IMR-90 (cell line): ENCODE measurements at regions of chr7 and their contacts with region 1.

Region 1: DNA sequence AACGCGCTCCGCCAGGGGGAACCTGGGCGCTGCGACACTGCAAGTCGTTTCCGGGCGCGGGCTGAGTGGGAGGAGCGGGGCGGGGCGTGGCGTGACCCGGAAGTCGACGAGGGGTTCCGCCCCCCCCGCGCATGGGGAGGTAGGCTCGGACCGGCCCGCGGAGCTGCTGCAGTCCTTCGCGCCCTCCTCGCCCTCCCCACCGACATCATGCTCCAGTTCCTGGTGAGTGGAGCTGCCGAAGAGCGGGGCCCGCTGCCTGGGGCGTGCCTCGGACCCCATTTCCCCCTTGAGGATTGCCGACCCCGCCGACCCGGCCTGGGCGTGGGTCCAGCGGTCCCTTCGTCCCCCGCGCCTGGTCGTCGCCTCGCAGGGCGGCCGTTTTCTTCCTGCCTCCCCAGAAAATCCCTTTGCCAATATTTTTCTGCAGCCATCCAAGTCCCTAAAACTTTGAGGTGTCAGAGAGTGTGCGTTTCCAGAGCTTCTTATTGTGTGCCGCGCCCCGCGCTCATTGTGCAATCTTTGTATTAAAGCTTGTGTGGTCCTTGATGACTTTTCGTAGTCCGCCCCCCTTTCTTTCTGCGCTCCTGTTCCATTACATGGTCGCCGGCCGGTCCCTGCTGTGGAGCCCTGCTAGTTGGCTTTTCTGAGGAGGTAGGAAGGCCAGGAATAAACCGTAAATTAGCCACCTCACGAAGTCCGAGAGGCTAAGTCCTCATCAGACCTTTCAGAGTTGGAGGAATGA is at the start of gene STMP1:
- DNase-seq: peak; percentile 96
- ATAC-seq: peak; percentile 93
- H3K4me3 ChIP-seq: peak within 1 kb of the TSS; percentile 84
- H3K27ac ChIP-seq: peak within 1 kb of the TSS; percentile 100
- H3K4me1 ChIP-seq: peaks cover 9% of the 10 kb centered on the region
- H3K27me3 ChIP-seq: no peaks in the 10 kb centered on the region
- CTCF ChIP-seq: peak; percentile 80
- POLR2A ChIP-seq: peak; percentile 94
- RAD21 ChIP-seq: peak; percentile 68
- total RNA-seq, gene STMP1: 6.1 and 11.9 TPM in 2 replicates

Region 2: DNA sequence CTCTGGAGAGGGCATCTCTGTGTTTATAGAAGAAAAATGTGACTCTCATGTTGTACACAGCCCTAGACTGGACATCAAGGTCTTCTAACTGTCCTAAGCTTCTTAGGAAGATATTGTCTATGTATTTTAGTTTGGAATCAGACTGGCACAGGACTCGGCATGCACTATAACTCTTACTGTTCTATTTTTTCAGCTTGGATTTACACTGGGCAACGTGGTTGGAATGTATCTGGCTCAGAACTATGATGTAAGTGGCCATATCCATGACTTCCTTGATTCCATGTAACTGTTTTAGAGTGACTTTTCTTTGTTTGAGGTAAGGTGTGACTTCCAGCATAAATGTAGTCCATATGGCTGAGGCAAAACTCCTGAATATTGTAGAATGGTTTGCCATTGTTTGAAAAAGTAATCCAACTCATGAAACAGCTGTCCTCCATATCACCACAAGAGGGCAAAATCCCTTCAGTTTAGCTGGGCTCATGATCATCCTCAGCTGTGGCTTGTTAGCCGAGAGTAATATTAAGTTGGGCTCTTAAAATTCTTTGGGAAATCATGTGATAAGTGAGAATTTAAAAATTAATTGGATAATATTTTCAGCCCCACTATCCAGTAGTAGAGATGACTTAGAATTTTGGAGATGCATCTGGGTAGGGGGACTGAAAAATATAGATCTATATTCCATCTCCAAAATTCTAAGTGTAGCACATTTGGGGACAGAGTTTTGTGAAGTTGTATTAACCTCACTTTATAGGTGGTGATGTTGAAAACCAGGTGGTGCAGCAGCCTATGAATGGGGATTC is 10.2 kb after region 1 on chr7:
- CTCF ChIA-PET with region 1: interaction called, 24 read pairs
- POLR2A ChIA-PET with region 1: no interaction called
- dilution Hi-C with region 1: no loop called
- in situ Hi-C with region 1: no loop called
- intact Hi-C with region 1: no loop called
- DNase-seq: peak; percentile 84
- ATAC-seq: peak; percentile 71
- H3K4me3 ChIP-seq: no peak overlapping the region
- H3K27ac ChIP-seq: no peak overlapping the region
- H3K4me1 ChIP-seq: peaks cover 9% of the 10 kb centered on the region
- H3K27me3 ChIP-seq: no peaks in the 10 kb centered on the region
- CTCF ChIP-seq: peak; percentile 88
- POLR2A ChIP-seq: no peak
- RAD21 ChIP-seq: peak; percentile 91

Region 3: DNA sequence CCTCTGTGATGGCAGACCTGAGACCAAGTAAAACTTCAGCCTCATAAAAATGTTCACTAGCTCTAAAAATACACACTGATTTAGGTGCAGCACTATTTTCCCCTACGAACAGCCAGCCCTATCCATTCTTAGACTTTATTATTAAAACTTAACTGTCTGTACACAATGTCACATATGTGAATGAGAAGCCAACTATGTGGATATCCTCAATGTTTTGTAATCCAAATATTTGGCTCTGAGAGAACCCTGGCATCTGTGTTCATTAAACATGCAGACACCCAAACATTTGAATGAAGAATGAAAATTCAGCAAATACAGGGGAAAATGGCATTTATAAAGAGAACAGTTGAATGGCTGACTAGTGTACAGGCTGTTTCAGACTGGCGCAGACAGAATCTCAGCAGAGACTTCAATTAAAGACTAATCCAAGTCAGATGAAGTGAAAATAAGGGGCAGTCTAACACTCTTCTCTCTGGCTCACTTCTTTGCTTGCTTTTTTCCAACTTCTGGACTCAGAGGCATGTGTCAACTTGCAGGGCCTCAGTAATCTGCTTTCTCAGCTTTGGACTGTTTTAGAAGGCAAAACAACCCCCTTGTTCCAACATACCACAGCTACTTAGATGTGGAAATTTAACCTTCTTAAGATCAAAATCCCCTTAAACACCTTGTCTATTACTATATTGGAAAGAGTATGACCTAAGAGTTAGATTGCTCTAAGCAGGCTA is 133.5 kb after region 1 on chr7:
- CTCF ChIA-PET with region 1: interaction called, 12 read pairs
- POLR2A ChIA-PET with region 1: no interaction called
- dilution Hi-C with region 1: no loop called
- in situ Hi-C with region 1: no loop called
- intact Hi-C with region 1: loop called (anchors 2 kb)
- DNase-seq: no peak
- ATAC-seq: peak; percentile 55
- H3K4me3 ChIP-seq: no peak overlapping the region
- H3K27ac ChIP-seq: peak overlapping the region; percentile 8; the same call in 1 of the 2 replicates
- H3K4me1 ChIP-seq: peaks cover 6% of the 10 kb centered on the region
- H3K27me3 ChIP-seq: no peaks in the 10 kb centered on the region
- CTCF ChIP-seq: no peak
- POLR2A ChIP-seq: no peak
- RAD21 ChIP-seq: no peak

Region 4: DNA sequence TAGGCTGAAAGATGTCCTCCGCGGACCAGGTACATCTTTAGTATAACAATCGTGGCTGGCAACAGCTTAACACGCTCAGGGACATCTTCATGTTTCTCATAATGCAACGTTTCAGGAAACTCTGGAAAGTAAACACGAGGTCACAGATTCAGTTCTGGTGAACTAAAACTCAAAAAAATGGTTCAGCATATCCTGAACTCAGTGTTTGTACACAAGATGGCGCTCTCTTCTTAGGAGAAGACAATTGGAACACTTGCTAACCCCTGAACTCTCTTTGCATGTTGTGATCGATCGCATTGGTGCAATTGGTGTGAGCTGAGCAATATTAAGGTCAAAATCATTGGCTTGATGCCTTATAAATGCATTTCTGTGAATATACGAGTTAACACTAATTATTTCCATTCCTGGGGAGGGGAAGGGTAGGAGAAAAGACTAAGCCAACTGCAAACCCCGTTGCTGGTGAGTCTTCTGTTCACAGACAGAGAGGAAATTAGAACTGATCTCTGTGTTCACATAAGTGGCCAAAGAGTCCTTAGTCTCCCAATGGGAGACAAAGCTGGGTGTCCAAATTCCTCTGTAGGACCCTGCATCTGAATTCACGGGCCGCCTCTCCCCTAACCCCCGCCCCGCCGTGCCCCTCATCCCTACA is 138.6 kb after region 1 on chr7:
- CTCF ChIA-PET with region 1: interaction called, 12 read pairs
- POLR2A ChIA-PET with region 1: no interaction called
- dilution Hi-C with region 1: no loop called
- in situ Hi-C with region 1: no loop called
- intact Hi-C with region 1: loop called (anchors 2 kb)
- DNase-seq: peak; percentile 74
- ATAC-seq: peak; percentile 81
- H3K4me3 ChIP-seq: no peak overlapping the region
- H3K27ac ChIP-seq: no peak overlapping the region
- H3K4me1 ChIP-seq: peaks cover 2% of the 10 kb centered on the region; the same call in 1 of the 2 replicates
- H3K27me3 ChIP-seq: no peaks in the 10 kb centered on the region
- CTCF ChIP-seq: peak; percentile 90
- POLR2A ChIP-seq: no peak
- RAD21 ChIP-seq: peak; percentile 97